MCF 10A (cell line): ENCODE measurements at regions of chr3 and their contacts with region 1.

Region 1: GRCh38 chr3:8970971-8971589 is 7.8 kb upstream of the RAD18 start:
- DNase-seq: peak; percentile 75
- H3K4me3 Mint-ChIP-seq: no peak overlapping the region
- H3K27ac Mint-ChIP-seq: no peak overlapping the region
- H3K4me1 Mint-ChIP-seq: no peaks in the 10 kb centered on the region
- H3K27me3 Mint-ChIP-seq: peaks cover 10% of the 10 kb centered on the region
- CTCF ChIP-seq: peak; percentile 95

Region 2: GRCh38 chr3:8982509-8982908 is 11.4 kb after region 1 on chr3:
- CTCF ChIA-PET with region 1: interaction called, 31 read pairs
- POLR2A ChIA-PET with region 1: no interaction called
- intact Hi-C with region 1: no loop called
- DNase-seq: no peak
- H3K4me3 Mint-ChIP-seq: no peak overlapping the region
- H3K27ac Mint-ChIP-seq: no peak overlapping the region
- H3K4me1 Mint-ChIP-seq: no peaks in the 10 kb centered on the region
- H3K27me3 Mint-ChIP-seq: no peaks in the 10 kb centered on the region
- CTCF ChIP-seq: no peak

Region 3: DNA sequence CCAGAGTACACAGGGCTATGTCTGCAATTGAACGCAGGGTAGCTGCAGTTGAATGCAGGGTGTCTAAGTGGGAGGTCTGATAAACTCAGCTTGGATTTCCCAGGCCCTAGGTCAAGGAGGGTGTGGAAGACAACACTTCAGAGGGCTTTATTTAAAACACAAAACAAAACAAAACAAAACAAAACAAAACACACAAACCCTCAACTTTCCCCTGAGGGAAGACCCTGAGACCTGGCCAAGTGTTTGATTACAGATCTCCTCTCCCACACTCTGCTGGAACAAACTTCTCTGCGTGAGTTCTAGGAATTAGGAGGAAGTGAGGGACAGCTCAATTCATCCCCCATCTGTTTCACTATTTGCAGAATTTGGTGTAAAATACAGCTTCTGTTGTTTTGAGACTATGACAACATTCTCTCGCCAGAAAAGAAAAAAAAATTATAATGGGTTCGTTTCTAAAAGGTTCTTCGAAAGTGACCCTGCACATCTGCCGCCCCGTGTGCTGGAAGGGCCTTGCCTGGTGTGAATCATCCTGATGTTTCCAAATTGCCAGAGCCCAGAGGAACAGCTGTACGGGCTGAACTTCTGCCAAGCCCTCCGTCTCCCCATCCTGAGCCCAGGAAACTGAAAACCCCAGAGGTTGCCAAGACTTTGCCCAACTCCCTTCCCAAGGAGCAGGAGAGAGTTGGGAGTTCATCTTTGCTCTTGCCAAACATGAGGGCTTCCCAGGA is 65.5 kb after region 1 on chr3:
- CTCF ChIA-PET with region 1: no interaction called
- POLR2A ChIA-PET with region 1: no interaction called
- intact Hi-C with region 1: no loop called
- DNase-seq: peak; percentile 84
- H3K4me3 Mint-ChIP-seq: no peak overlapping the region
- H3K27ac Mint-ChIP-seq: no peak overlapping the region
- H3K4me1 Mint-ChIP-seq: no peaks in the 10 kb centered on the region
- H3K27me3 Mint-ChIP-seq: no peaks in the 10 kb centered on the region
- CTCF ChIP-seq: no peak

Region 4: GRCh38 chr3:9067352-9067975 is 96.4 kb after region 1 on chr3:
- CTCF ChIA-PET with region 1: interaction called, 10 read pairs
- POLR2A ChIA-PET with region 1: no interaction called
- intact Hi-C with region 1: loop called (anchors 1 kb)
- DNase-seq: peak; percentile 55
- H3K4me3 Mint-ChIP-seq: no peak overlapping the region
- H3K27ac Mint-ChIP-seq: no peak overlapping the region
- H3K4me1 Mint-ChIP-seq: no peaks in the 10 kb centered on the region
- H3K27me3 Mint-ChIP-seq: no peaks in the 10 kb centered on the region
- CTCF ChIP-seq: peak; percentile 89